K562 (cell line): ENCODE measurements at regions of chr3 and their contacts with region 1.

Region 1: DNA sequence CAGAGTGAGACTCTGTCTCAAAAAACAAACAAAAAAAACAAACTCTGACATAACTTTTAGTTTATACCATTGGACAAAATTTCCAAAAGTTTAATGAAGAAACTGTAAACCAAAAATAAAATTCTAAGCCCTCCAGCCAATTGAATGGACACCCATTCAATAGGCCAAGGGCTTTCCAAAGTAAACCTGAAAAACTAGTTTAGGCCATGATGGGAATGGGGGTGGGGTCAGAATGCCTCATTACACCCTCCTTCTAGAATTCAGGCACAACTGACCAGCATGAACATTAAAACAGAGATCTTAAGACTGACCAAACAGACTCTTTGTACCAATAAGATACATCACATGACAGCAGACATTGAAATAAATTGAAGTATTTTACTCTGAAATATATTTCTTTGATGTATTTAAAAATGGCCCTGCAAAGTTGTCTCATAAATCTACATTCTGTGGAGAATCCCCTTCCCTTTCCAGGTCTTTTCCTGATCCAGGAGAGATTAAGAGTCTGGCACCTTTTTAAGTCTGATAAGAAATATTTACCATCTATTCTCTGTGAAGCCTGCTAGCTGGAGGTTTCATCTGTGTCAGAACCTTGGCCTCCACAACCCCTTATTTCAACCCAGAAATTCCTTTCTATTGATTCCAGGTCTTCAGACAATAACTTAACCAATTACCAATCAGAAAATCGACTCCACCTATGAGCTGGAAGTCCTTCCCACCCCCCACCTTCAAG is 15.7 kb downstream of the THOC7 start:
- DNase-seq: no peak
- ATAC-seq: no peak
- H3K4me3 ChIP-seq: no peak overlapping the region
- H3K27ac ChIP-seq: no peak overlapping the region
- H3K4me1 ChIP-seq: no peaks in the 10 kb centered on the region
- H3K27me3 ChIP-seq: no peaks in the 10 kb centered on the region
- CTCF ChIP-seq: no peak
- EP300 ChIP-seq: no peak
- POLR2A ChIP-seq: no peak
- RAD21 ChIP-seq: no peak

Region 2: DNA sequence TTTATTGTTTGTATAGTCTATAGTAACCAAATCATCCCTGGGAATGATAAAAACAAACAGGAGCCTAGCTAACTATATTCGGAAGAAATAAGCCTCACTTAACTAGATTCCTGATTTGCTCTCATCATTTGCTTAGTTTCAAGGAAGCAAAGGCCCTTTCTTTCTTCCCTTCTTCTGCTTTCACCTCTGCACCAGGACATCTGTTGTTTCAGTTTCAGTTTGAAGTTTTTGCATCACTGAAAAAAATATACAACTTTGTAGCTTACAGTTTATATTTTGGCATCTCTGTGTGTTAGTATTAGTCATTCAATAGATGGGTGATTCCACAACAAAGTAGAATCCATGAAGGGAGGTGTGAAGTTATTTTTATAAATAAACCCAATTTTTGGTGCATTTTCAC is 309.0 kb before region 1 on chr3:
- CTCF ChIA-PET with region 1: no interaction called
- POLR2A ChIA-PET with region 1: no interaction called
- in situ Hi-C with region 1: no loop called
- intact Hi-C with region 1: no loop called
- DNase-seq: no peak
- ATAC-seq: no peak
- H3K4me3 ChIP-seq: no peak overlapping the region
- H3K27ac ChIP-seq: no peak overlapping the region
- H3K4me1 ChIP-seq: no peaks in the 10 kb centered on the region
- H3K27me3 ChIP-seq: no peaks in the 10 kb centered on the region
- CTCF ChIP-seq: no peak
- EP300 ChIP-seq: no peak
- POLR2A ChIP-seq: no peak
- RAD21 ChIP-seq: no peak

Region 3: GRCh38 chr3:63785879-63786278 is 62.0 kb before region 1 on chr3:
- CTCF ChIA-PET with region 1: no interaction called
- POLR2A ChIA-PET with region 1: no interaction called
- in situ Hi-C with region 1: no loop called
- intact Hi-C with region 1: no loop called
- DNase-seq: no peak
- ATAC-seq: no peak
- H3K4me3 ChIP-seq: no peak overlapping the region
- H3K27ac ChIP-seq: no peak overlapping the region
- H3K4me1 ChIP-seq: no peaks in the 10 kb centered on the region
- H3K27me3 ChIP-seq: no peaks in the 10 kb centered on the region
- CTCF ChIP-seq: no peak
- EP300 ChIP-seq: no peak
- POLR2A ChIP-seq: no peak
- RAD21 ChIP-seq: no peak

Region 4: DNA sequence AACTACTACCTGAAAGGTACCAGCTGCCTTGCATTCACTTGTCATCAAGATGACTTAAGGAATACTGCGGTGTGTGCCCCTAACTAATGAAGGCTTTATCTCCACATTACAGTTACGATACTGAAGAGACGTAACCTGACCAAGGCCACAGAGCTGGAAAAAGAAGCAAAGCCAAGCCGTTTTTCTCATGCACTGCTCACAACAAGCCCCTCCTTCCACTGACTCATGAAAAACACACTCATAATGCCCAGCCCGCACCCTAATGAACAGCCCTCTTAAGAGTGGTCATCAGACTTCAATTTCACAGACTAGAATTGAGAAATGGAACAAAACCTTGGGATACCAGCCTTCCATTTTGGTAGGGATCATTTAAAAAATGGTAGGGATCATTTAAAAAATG is 163.8 kb after region 1 on chr3:
- CTCF ChIA-PET with region 1: no interaction called
- POLR2A ChIA-PET with region 1: no interaction called
- in situ Hi-C with region 1: no loop called
- intact Hi-C with region 1: loop called (anchors 10 kb)
- DNase-seq: peak in 2 of 4 experiments; percentile 12 to 27
- ATAC-seq: peak; percentile 53
- H3K4me3 ChIP-seq: no peak overlapping the region
- H3K27ac ChIP-seq: peak overlapping the region; percentile 40; the same call in 1 of the 3 replicates
- H3K4me1 ChIP-seq: peaks cover 0 to 20% of the 10 kb centered on the region in 2 experiments; a peak in 4 of 5 replicates
- H3K27me3 ChIP-seq: no peaks in the 10 kb centered on the region
- CTCF ChIP-seq: no peak
- EP300 ChIP-seq: no peak
- POLR2A ChIP-seq: no peak
- RAD21 ChIP-seq: no peak